ENCODE measurements at regions of chr10 and their contacts with region 1.

Region 1: GRCh38 chr10:29386342-29386999 is 97.6 kb downstream of the LYZL1 start:
- DNase-seq: no peak
- H3K4me3 ChIP-seq: no peak overlapping the region
- H3K27ac ChIP-seq: no peak overlapping the region
- H3K4me1 ChIP-seq: no peaks in the 10 kb centered on the region
- H3K27me3 ChIP-seq: no peaks in the 10 kb centered on the region
- CTCF ChIP-seq: peak; percentile 49 to 73 (median 69)
- EP300 ChIP-seq: no peak
- POLR2A ChIP-seq: no peak

Region 2: GRCh38 chr10:29443745-29444523 is 57.5 kb after region 1 on chr10:
- intact Hi-C with region 1: loop called (anchors 5 to 10 kb)
- DNase-seq: no peak
- H3K4me3 ChIP-seq: no peak overlapping the region
- H3K27ac ChIP-seq: no peak overlapping the region
- H3K4me1 ChIP-seq: no peaks in the 10 kb centered on the region
- H3K27me3 ChIP-seq: no peaks in the 10 kb centered on the region
- CTCF ChIP-seq: no peak
- EP300 ChIP-seq: no peak
- POLR2A ChIP-seq: no peak

Region 3: GRCh38 chr10:29491918-29492317 is 105.4 kb after region 1 on chr10:
- intact Hi-C with region 1: loop called in 1 of 4 experiments (anchors 5 kb)
- DNase-seq: no peak
- H3K4me3 ChIP-seq: no peak overlapping the region
- H3K27ac ChIP-seq: no peak overlapping the region
- H3K4me1 ChIP-seq: peaks cover 2% of the 10 kb centered on the region
- H3K27me3 ChIP-seq: no peaks in the 10 kb centered on the region
- CTCF ChIP-seq: no peak
- EP300 ChIP-seq: no peak
- POLR2A ChIP-seq: no peak

Measured in ovary (tissue), 10 donors.